ENCODE measurements at regions of chr20 and their contacts with region 1.

Region 1: DNA sequence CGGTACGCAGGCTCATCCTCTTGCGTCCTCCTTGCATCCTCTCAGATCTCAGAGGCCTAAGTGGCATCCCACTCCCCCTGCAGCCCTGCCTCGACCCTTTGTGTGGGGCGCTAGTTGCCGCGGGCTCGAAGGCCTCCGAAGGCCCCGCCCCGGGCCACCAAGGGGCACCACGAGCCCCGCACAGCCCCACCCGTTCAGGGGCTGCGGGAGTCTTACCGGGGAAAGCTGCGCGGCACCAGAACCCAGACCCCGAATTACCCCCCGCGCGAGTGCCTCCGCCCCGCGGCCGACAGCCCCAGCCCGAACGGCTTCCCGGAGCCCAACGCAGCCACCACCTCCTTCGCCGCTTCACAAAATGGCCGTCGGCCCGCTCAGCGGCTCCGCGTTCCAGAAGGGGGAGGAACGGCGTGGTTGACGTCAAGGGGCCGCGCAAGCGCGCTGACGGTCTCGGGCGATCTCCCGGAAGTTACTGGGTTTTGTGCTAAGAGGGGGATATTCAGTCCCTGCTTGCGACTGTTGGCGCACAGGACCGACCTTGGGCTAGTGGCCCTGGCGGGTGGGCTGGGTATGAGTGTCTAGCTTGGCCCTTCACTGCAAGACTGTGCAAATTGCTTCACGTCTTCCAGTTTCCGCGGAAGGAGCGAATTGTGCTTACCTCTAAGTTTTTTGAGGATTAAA is at the starts of genes CPNE1 and RBM12:
- DNase-seq: peak; percentile 94
- ATAC-seq: peak; percentile 75
- H3K4me3 Mint-ChIP-seq: peak within 1 kb of the TSS; percentile 93
- H3K27ac Mint-ChIP-seq: peak within 1 kb of the TSS; percentile 99
- H3K4me1 Mint-ChIP-seq: peaks cover 31% of the 10 kb centered on the region
- H3K27me3 Mint-ChIP-seq: no peaks in the 10 kb centered on the region
- CTCF ChIP-seq: no peak
- total RNA-seq, gene CPNE1: 308 to 324 TPM
- total RNA-seq, gene RBM12: 111 to 114 TPM

Region 2: DNA sequence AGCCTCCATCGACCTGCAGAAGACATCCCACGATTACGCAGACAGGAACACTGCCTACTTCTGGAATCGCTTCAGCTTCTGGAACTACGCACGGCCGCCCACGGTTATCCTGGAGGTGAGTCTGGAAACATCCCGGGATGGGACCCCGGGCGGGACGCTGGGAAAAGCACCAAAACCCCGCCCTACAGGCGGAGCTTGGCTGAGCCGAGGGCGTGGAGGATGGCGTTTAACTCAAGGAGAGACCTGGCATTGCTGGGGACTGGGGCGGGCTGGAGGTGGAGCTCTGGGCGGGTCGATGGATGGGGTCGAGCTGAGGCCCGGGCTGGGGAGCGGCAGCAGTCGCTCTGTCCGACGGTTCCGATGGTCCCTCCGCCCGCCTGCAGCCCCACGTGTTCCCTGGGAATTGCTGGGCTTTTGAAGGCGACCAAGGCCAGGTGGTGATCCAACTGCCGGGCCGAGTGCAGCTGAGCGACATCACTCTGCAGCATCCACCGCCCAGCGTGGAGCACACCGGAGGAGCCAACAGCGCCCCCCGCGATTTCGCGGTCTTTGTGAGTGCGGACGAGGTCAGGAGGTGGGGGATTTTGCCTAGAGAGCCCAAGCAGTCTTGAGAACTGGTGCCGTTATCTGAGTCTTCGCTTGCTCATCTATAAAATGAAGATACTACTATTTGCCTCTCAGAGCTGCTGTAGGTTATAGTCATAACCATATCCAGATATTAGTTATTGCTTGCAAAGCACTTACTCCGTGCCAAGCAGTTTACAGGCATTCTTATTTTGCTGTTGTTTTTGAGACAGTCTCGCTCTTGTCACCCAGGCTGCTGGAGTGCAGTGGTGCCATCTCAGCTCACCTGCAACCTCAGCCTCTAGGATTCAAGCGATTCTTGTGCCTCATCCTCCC is 45.2 kb before region 1 on chr20:
- CTCF ChIA-PET with region 1: interaction called, 49 read pairs
- POLR2A ChIA-PET with region 1: interaction called, 163 read pairs
- intact Hi-C with region 1: loop called (anchors 5 kb)
- DNase-seq: peak; percentile 92
- ATAC-seq: peak; percentile 35
- H3K4me3 Mint-ChIP-seq: peak overlapping the region; percentile 89
- H3K27ac Mint-ChIP-seq: peak overlapping the region; percentile 83
- H3K4me1 Mint-ChIP-seq: peaks cover 41% of the 10 kb centered on the region
- H3K27me3 Mint-ChIP-seq: peaks cover 3% of the 10 kb centered on the region
- CTCF ChIP-seq: peak; percentile 45

Region 3: DNA sequence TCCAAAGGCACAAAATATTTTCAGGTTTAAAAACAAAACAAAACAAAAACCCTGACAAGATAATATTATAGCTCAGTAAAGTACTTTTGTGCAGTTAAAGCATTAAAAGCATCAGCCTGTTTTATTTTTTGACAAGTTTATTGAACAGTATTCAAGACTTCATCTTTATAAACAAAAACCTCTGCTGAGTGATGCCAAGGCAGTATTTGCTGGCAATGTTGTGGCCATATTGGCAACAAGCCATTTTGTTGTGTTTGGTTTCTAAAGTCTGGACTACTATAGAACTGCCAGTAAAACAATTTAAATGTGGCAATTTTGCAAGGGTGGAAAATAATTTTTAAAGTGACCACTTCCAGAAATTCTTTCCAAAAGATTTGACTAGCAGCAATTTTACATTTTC is 15.8 kb before region 1 on chr20:
- CTCF ChIA-PET with region 1: interaction called, 3 read pairs
- POLR2A ChIA-PET with region 1: interaction called, 30 read pairs
- intact Hi-C with region 1: no loop called
- DNase-seq: no peak
- ATAC-seq: no peak
- H3K4me3 Mint-ChIP-seq: no peak overlapping the region
- H3K27ac Mint-ChIP-seq: peak overlapping the region; percentile 32
- H3K4me1 Mint-ChIP-seq: peaks cover 71% of the 10 kb centered on the region
- H3K27me3 Mint-ChIP-seq: no peaks in the 10 kb centered on the region
- CTCF ChIP-seq: no peak

Region 4: DNA sequence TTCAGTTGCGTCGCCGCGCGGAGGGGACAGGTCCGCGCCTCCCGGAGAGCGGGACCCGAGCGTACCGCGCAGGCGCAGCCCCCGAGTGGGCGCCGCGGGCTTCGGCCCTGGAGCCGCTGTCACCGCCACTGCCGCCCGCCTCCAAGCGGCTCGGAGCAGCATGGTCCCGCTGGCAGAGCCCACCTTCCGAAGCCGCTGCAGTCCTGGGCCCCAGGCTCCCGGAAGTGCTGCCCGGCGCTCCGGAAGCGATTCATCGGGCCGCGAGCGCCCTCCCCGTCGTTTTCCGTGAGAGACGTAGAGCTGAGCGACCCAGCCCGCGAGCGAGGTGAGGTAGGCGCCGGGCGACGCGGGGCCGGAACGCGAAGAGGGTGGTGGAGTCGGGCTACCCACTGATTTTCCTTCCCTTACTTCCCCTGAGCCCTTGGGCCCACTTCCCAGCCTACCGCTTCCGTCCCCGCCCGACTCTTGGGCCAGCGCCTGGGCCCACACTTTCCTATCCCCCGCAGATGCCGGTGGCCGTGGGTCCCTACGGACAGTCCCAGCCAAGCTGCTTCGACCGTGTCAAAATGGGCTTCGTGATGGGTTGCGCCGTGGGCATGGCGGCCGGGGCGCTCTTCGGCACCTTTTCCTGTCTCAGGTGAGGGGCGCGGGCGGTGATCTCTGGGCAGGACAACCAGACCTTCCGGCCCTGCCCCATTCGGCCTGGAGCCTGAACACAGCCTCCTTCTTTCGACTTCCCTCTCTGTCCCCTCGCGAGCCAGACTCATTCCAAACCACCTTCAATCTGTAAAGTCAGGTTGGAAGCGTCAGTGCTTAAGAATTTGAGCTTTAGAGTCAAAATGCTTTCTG is 34.7 kb after region 1 on chr20 and contains the starts of genes NFS1 and ROMO1:
- CTCF ChIA-PET with region 1: no interaction called
- POLR2A ChIA-PET with region 1: interaction called, 36 read pairs
- intact Hi-C with region 1: no loop called
- DNase-seq: peak; percentile 93
- ATAC-seq: peak; percentile 90
- H3K4me3 Mint-ChIP-seq: peak within 1 kb of the TSS; percentile 83
- H3K27ac Mint-ChIP-seq: peak within 1 kb of the TSS; percentile 97
- H3K4me1 Mint-ChIP-seq: peaks cover 33% of the 10 kb centered on the region
- H3K27me3 Mint-ChIP-seq: no peaks in the 10 kb centered on the region
- CTCF ChIP-seq: no peak
- total RNA-seq, gene NFS1: 39.7 to 40.8 TPM
- total RNA-seq, gene ROMO1: 146 to 148 TPM

Region 5: DNA sequence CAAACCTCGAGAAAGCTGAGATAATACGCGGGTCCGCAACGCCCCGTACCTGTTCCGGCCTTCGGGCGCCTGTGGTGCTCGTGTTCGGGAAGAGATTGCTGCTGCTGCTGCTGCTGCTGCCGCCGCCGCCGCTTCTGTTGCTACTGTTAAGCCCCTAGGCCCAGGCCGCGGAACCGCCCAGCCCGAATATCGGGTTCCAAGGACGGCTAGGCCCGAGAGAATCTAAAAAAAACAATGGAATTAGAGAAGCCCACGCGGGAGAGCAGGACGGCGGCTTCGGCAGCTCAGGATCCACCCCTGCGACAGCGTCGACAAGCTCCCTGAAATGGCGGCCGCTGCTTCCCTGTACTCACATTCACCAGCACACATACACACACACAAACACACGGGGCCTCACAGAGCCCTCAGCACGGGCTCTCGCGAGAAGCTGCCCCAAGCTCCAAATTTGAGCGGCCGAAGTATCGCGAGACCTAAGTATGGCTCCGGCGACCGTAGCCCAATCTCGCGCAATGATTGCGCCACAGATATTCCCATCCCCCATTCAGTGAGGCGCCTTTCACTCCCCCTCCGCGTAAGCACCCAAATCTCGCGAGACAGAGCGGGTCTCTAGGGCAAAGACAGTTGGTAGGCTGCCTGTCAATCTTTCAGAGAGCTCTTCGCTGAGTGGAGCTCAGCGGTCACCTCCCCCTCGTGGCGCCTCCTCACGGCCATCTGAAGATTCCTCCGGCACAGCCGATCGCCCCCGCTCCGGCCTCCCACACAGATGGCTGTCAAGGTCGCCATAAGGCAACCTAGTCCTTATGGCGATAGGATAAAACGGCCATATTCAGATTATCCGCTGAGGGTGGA is 77.4 kb after region 1 on chr20 and contains the start of gene RBM39:
- CTCF ChIA-PET with region 1: no interaction called
- POLR2A ChIA-PET with region 1: interaction called, 52 read pairs
- intact Hi-C with region 1: loop called (anchors 5 kb)
- DNase-seq: peak; percentile 100
- ATAC-seq: peak; percentile 89
- H3K4me3 Mint-ChIP-seq: peak within 1 kb of the TSS; percentile 92
- H3K27ac Mint-ChIP-seq: peak within 1 kb of the TSS; percentile 99
- H3K4me1 Mint-ChIP-seq: peaks cover 38% of the 10 kb centered on the region
- H3K27me3 Mint-ChIP-seq: no peaks in the 10 kb centered on the region
- CTCF ChIP-seq: no peak
- total RNA-seq, gene RBM39: 317 to 321 TPM

Region 6: DNA sequence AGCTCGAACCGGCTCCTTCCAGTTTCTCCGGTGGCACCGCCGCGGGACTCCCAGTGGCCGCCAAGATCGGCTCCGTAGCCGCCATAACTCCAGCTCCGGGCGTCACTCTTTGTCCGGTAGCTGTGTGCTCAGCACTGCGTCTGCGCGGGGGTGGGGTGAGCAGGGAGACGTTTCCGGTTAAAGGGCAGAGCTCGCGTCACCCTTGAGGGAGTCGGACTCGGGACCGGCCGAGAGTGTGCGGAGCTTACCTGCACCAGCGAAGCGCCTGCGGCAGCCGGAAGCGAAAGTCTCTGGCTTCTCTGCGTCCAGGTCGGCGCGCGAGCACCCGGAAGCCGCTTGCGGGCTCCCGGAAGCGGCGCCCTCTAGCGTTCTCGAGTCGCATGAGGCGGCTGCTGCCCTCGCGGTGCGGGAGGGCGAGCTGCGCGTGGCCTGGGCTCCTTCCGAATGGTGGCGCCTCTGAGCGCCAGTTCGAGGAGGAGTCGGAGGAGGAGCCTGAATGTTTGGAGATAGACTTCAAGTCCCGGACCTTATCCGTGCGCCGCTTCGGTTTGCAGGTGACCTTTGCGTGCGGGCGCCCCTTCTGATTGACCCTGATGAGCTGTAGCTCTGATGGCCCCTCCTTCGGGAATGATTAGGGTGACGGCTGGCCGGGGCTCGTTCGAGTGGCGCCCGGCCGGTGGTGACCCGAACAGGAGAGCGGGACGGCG is 289.7 kb after region 1 on chr20 and contains the start of gene SCAND1:
- CTCF ChIA-PET with region 1: interaction called, 12 read pairs
- POLR2A ChIA-PET with region 1: interaction called, 17 read pairs
- intact Hi-C with region 1: no loop called
- DNase-seq: peak; percentile 99
- ATAC-seq: peak; percentile 89
- H3K4me3 Mint-ChIP-seq: peak within 1 kb of the TSS; percentile 98
- H3K27ac Mint-ChIP-seq: peak within 1 kb of the TSS; percentile 100
- H3K4me1 Mint-ChIP-seq: peaks cover 16% of the 10 kb centered on the region
- H3K27me3 Mint-ChIP-seq: no peaks in the 10 kb centered on the region
- CTCF ChIP-seq: peak; percentile 93
- total RNA-seq, gene SCAND1: 46.4 to 49.2 TPM

Measured in activated CD8-positive, alpha-beta T cell treated with anti-CD3 and anti-CD28 coated beads for 36 hours (primary cell).